Activated CD8-positive, alpha-beta T cell treated with anti-CD3 and anti-CD28 coated beads, Interleukin-2, amount 10 ng/mL, durations not matched to agents 7 days and 5 days (primary cell): ENCODE measurements at regions of chr18 and their contacts with region 1.

Region 1: DNA sequence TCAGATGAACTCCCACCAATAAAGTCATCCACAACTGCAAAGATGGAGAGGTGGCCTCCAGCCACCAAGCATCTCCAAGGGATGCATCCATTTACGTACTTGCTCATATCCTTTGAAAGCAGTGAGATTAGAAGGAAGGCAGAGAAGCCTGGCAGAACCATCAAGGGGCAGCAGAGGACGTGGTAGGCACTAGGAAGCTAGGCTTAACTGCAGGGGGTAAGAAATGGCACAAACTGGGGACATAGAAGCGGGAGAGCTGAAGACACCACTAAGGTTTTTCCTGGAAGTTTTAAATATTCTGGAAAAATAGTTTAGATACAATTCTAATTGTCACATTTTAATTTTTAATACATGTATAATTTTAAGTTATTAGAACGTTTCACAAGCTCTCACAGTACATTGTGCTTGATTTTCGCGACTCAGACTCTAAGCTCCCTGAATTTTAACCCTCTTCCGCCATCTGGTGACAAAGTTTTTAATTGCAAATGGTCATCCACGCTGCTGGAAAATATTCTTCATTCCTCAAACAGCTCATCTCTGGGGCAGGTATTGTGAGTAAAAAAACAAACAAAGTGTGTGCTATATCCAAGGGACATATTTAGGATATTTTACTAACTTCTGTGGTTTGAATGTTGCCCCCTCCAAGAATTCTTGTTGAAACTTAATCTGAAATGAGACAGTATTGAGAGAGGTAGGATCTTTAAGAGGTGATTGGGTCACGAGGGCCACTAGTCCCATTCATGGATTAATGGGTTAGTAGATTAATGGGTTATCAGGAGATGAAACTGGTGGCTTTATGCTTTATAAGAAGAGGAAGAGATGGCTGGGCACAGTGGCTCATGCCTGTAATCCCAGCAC is 1.6 kb upstream of the PSTPIP2 start:
- DNase-seq: peak; percentile 75
- ATAC-seq: peak; percentile 45
- H3K4me3 Mint-ChIP-seq: no peak overlapping the region
- H3K27ac Mint-ChIP-seq: no peak overlapping the region
- H3K4me1 Mint-ChIP-seq: peaks cover 32% of the 10 kb centered on the region
- H3K27me3 Mint-ChIP-seq: no peaks in the 10 kb centered on the region

Region 2: GRCh38 chr18:45690975-45691815 is 382.5 kb before region 1 on chr18:
- CTCF ChIA-PET with region 1: interaction called, 18 read pairs
- POLR2A ChIA-PET with region 1: no interaction called
- DNase-seq: peak; percentile 85
- ATAC-seq: no peak
- H3K4me3 Mint-ChIP-seq: no peak overlapping the region
- H3K27ac Mint-ChIP-seq: no peak overlapping the region
- H3K4me1 Mint-ChIP-seq: peaks cover 49% of the 10 kb centered on the region
- H3K27me3 Mint-ChIP-seq: peaks cover 13% of the 10 kb centered on the region

Region 3: GRCh38 chr18:45916302-45916701 is 157.4 kb before region 1 on chr18:
- CTCF ChIA-PET with region 1: interaction called, 25 read pairs
- POLR2A ChIA-PET with region 1: no interaction called
- DNase-seq: no peak
- ATAC-seq: peak; percentile 55
- H3K4me3 Mint-ChIP-seq: no peak overlapping the region
- H3K27ac Mint-ChIP-seq: no peak overlapping the region
- H3K4me1 Mint-ChIP-seq: no peaks in the 10 kb centered on the region
- H3K27me3 Mint-ChIP-seq: no peaks in the 10 kb centered on the region

Region 4: DNA sequence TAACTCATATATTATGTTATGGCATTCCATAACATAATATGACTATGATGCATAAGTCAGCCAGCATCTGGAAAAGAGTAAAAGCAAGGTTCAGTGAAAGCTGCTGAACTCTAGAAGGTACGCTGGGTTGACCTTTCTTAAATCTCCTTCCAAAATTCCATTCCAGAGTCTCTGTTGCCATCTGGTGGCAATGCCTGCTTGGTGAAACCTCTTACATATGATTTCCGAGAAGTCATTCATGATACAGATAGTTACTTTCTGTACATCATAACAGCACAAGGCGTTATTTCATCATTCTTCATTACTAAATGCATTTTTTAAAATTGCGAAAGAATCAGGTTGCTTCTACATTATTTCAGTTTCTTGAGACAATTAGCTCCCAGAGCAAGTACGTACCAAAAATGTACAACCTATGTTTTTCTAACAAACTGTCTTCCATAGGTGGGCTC is 99.6 kb before region 1 on chr18:
- CTCF ChIA-PET with region 1: interaction called, 25 read pairs
- POLR2A ChIA-PET with region 1: no interaction called
- DNase-seq: peak; percentile 80
- ATAC-seq: peak; percentile 74
- H3K4me3 Mint-ChIP-seq: no peak overlapping the region
- H3K27ac Mint-ChIP-seq: peak overlapping the region; percentile 2
- H3K4me1 Mint-ChIP-seq: peaks cover 7% of the 10 kb centered on the region
- H3K27me3 Mint-ChIP-seq: no peaks in the 10 kb centered on the region

Region 5: DNA sequence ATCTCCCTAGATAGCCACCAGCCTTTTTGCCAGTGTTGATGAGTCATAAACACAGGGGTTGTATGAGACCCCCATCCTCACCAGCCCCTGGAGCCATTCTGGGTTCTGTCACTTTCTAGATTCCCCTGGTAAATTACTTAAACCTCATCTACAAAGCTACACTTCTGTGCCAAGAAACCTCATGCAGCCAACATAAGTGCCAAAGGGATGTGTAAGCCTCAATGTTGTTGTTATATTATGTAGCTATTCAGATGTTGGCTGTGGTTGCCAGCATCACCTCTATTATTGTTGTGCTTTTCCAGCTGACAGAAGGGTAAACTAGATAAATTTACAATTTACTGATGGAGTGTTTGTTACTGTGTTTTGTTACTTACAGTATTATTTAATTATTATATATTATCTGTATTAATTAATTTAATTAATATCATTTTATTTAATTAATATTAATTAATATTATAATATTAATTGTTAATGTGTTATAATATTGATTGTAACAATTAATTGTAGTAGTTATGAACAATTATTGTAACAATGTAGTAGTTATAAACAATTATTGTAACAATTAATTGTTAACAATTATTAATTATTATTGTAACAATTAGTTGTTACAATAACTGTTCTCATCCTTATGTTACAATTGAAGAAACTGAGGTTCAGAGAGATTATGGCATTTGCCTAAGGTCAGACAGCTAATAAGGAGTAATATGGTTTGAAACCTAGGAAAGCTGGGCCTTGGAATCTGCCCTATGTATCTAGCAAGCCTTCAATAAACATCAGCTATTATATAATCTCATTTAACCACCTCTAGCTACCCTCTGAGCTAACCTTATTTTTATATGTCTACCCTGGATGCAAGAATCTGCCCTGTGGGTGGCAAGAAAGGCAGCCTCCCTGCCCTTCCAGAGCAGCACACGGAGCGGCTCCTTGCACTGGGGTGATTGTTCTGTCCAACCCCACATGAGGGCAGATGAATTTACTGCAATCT is 37.7 kb before region 1 on chr18:
- CTCF ChIA-PET with region 1: interaction called, 16 read pairs
- POLR2A ChIA-PET with region 1: no interaction called
- DNase-seq: no peak
- ATAC-seq: no peak
- H3K4me3 Mint-ChIP-seq: no peak overlapping the region
- H3K27ac Mint-ChIP-seq: no peak overlapping the region
- H3K4me1 Mint-ChIP-seq: peaks cover 16% of the 10 kb centered on the region
- H3K27me3 Mint-ChIP-seq: no peaks in the 10 kb centered on the region

Region 6: GRCh38 chr18:46084431-46084830 is 10.7 kb after region 1 on chr18:
- CTCF ChIA-PET with region 1: interaction called, 18 read pairs
- POLR2A ChIA-PET with region 1: interaction called, 3 read pairs
- DNase-seq: no peak
- ATAC-seq: no peak
- H3K4me3 Mint-ChIP-seq: no peak overlapping the region
- H3K27ac Mint-ChIP-seq: no peak overlapping the region
- H3K4me1 Mint-ChIP-seq: no peaks in the 10 kb centered on the region
- H3K27me3 Mint-ChIP-seq: no peaks in the 10 kb centered on the region

Region 7: GRCh38 chr18:46104128-46104911 is 30.6 kb after region 1 on chr18 and contains the start of gene HAUS1:
- CTCF ChIA-PET with region 1: no interaction called
- POLR2A ChIA-PET with region 1: no interaction called
- DNase-seq: peak; percentile 84
- ATAC-seq: peak; percentile 91
- H3K4me3 Mint-ChIP-seq: peak within 1 kb of the TSS; percentile 97
- H3K27ac Mint-ChIP-seq: peak within 1 kb of the TSS; percentile 94
- H3K4me1 Mint-ChIP-seq: peaks cover 32% of the 10 kb centered on the region
- H3K27me3 Mint-ChIP-seq: no peaks in the 10 kb centered on the region
- total RNA-seq, gene HAUS1: 63.7 to 65.9 TPM

Region 8: DNA sequence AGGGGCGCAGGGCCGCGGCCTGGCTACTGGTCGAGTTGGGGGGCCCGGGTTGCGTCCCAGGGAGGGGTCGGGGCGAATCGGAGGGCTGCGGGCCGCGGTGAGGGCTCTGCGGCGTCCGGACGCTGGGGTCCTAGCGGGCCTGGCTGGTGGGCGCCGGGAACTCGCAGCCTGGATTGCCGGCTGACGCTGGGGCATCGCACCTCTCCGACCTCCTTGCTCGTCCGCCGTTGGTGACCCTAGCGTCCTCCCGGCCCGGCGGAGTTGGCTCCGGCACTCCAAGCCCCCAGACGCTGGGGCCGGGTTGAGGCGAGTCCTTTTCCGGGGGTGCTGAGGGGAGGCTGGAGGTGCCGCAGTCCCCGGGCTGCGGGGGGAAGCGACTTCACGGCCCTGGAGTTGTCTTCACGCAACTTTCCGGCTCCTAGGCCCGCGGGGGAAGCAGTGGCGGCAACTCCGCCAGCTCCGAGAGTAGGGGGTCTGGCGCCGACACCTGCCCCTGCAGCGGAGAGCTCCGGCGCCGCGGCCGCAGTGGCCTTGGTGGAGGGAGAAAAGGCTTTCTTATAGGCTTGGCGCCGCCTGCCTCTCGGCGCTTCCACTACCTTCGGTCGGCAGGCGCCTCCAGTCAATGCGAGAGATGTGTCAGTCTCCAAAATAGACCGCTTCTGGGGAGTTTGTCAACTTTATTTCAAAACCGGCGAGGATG is 100.8 kb after region 1 on chr18:
- CTCF ChIA-PET with region 1: no interaction called
- POLR2A ChIA-PET with region 1: no interaction called
- DNase-seq: peak; percentile 58
- ATAC-seq: peak; percentile 9
- H3K4me3 Mint-ChIP-seq: peak overlapping the region; percentile 97
- H3K27ac Mint-ChIP-seq: peak overlapping the region; percentile 99
- H3K4me1 Mint-ChIP-seq: peaks cover 56% of the 10 kb centered on the region
- H3K27me3 Mint-ChIP-seq: no peaks in the 10 kb centered on the region